CD8-positive, alpha-beta memory T cell (primary cell): ENCODE measurements at regions of chr2 and their contacts with region 1.

Region 1: GRCh38 chr2:112626604-112627059 is 19.1 kb upstream of the SLC20A1 start:
- DNase-seq: peak; percentile 35 to 79 (median 61)
- H3K4me3 ChIP-seq: peak overlapping the region; percentile 58
- H3K4me3 Mint-ChIP-seq: peak overlapping the region; percentile 13 to 88 (median 72)
- H3K27ac ChIP-seq: no peak overlapping the region
- H3K27ac Mint-ChIP-seq: peak overlapping the region in 7 of 8 donors; percentile 79 to 96 (median 88)
- H3K4me1 ChIP-seq: peaks cover 73% of the 10 kb centered on the region
- H3K4me1 Mint-ChIP-seq: peaks cover 68 to 79% (median 76%) of the 10 kb centered on the region in 3 donors
- H3K27me3 ChIP-seq: no peaks in the 10 kb centered on the region
- H3K27me3 Mint-ChIP-seq: peaks cover 0 to 2% of the 10 kb centered on the region in 2 donors

Region 2: GRCh38 chr2:112606488-112606902 is 20.1 kb before region 1 on chr2:
- CTCF ChIA-PET with region 1: interaction called, 28 read pairs
- POLR2A ChIA-PET with region 1: no interaction called
- DNase-seq: no peak
- H3K4me3 ChIP-seq: no peak overlapping the region
- H3K4me3 Mint-ChIP-seq: no peak overlapping the region
- H3K27ac ChIP-seq: no peak overlapping the region
- H3K27ac Mint-ChIP-seq: no peak overlapping the region
- H3K4me1 ChIP-seq: no peaks in the 10 kb centered on the region
- H3K4me1 Mint-ChIP-seq: no peaks in the 10 kb centered on the region
- H3K27me3 ChIP-seq: no peaks in the 10 kb centered on the region
- H3K27me3 Mint-ChIP-seq: peaks cover 0 to 3% of the 10 kb centered on the region in 2 donors

Region 3: GRCh38 chr2:112645310-112646101 is 18.9 kb after region 1 on chr2 and contains the start of gene SLC20A1:
- CTCF ChIA-PET with region 1: interaction called, 147 read pairs
- POLR2A ChIA-PET with region 1: interaction called, 96 read pairs
- DNase-seq: peak; percentile 98 to 99 (median 98)
- H3K4me3 ChIP-seq: peak within 1 kb of the TSS; percentile 68
- H3K4me3 Mint-ChIP-seq: peak within 1 kb of the TSS; percentile 89 to 98 (median 93)
- H3K27ac ChIP-seq: peak within 1 kb of the TSS; percentile 90
- H3K27ac Mint-ChIP-seq: peak within 1 kb of the TSS; percentile 91 to 97 (median 95)
- H3K4me1 ChIP-seq: peaks cover 50% of the 10 kb centered on the region
- H3K4me1 Mint-ChIP-seq: peaks cover 59 to 73% (median 72%) of the 10 kb centered on the region in 3 donors
- H3K27me3 ChIP-seq: no peaks in the 10 kb centered on the region
- H3K27me3 Mint-ChIP-seq: no peaks in the 10 kb centered on the region
- total RNA-seq, gene SLC20A1: 102 to 105 TPM

Region 4: DNA sequence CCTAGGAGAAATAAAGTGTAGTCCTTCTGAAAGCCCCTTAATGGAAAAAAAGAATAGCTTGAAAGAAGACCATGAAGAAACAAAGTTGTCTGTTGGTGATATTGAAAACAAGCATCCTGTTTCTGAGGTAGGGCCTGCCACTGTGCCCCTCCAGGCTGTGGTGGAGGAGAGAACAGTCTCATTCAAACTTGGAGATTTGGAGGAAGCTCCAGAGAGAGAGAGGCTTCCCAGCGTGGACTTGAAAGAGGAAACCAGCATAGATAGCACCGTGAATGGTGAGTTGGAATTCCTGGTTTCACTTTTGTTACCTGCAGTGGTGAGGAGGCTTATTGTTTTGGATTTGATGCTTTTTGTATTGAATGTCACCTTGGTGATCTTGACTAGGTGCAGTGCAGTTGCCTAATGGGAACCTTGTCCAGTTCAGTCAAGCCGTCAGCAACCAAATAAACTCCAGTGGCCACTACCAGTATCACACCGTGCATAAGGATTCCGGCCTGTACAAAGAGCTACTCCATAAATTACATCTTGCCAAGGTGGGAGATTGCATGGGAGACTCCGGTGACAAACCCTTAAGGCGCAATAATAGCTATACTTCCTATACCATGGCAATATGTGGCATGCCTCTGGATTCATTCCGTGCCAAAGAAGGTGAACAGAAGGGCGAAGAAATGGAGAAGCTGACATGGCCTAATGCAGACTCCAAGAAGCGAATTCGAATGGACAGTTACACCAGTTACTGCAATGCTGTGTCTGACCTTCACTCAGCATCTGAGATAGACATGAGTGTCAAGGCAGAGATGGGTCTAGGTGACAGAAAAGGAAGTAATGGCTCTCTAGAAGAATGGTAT is 32.4 kb after region 1 on chr2:
- CTCF ChIA-PET with region 1: interaction called, 11 read pairs
- POLR2A ChIA-PET with region 1: interaction called, 7 read pairs
- DNase-seq: no peak
- H3K4me3 ChIP-seq: no peak overlapping the region
- H3K4me3 Mint-ChIP-seq: peak overlapping the region in 3 of 7 donors; percentile 8 to 54 (median 40)
- H3K27ac ChIP-seq: peak overlapping the region; percentile 45
- H3K27ac Mint-ChIP-seq: peak overlapping the region; percentile 31 to 90 (median 74)
- H3K4me1 ChIP-seq: peaks cover 33% of the 10 kb centered on the region
- H3K4me1 Mint-ChIP-seq: peaks cover 58 to 76% (median 72%) of the 10 kb centered on the region in 3 donors
- H3K27me3 ChIP-seq: no peaks in the 10 kb centered on the region
- H3K27me3 Mint-ChIP-seq: peaks cover 0 to 4% of the 10 kb centered on the region in 2 donors

Region 5: DNA sequence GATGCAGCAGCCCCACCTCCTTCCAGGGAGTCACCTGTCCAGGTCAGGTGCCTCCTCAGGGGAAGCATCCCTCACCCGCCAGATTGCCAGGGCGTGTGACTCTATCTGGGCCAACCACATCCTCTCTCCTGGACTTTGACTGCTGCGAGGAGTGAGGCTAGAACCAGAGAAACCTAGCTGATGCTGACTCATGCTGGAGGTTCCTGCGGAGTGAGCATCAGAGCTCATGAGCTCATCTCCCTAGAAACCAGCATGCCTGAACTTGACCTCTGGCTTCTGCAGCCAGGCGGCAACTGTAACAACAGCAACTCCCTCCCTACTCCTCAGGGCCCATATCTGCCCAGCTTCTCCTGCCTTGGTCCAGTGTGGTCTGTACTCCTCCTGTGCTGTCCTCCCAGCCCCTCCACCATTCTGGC is 65.9 kb after region 1 on chr2:
- CTCF ChIA-PET with region 1: interaction called, 132 read pairs
- POLR2A ChIA-PET with region 1: interaction called, 4 read pairs
- DNase-seq: peak in 4 of 5 donors; percentile 15 to 58 (median 29)
- H3K4me3 ChIP-seq: no peak overlapping the region
- H3K4me3 Mint-ChIP-seq: peak overlapping the region in 5 of 7 donors; percentile 36 to 63 (median 60)
- H3K27ac ChIP-seq: peak overlapping the region; percentile 21
- H3K27ac Mint-ChIP-seq: peak overlapping the region; percentile 1 to 96 (median 84)
- H3K4me1 ChIP-seq: peaks cover 26% of the 10 kb centered on the region
- H3K4me1 Mint-ChIP-seq: peaks cover 27 to 29% (median 29%) of the 10 kb centered on the region in 3 donors
- H3K27me3 ChIP-seq: no peaks in the 10 kb centered on the region
- H3K27me3 Mint-ChIP-seq: peaks cover 0 to 2% of the 10 kb centered on the region in 2 donors

Region 6: GRCh38 chr2:112726497-112727190 is 100.0 kb after region 1 on chr2:
- CTCF ChIA-PET with region 1: interaction called, 71 read pairs
- POLR2A ChIA-PET with region 1: interaction called, 3 read pairs
- DNase-seq: peak; percentile 76 to 90 (median 81)
- H3K4me3 ChIP-seq: no peak overlapping the region
- H3K4me3 Mint-ChIP-seq: no peak overlapping the region
- H3K27ac ChIP-seq: no peak overlapping the region
- H3K27ac Mint-ChIP-seq: peak overlapping the region in 1 of 8 donors; percentile 19
- H3K4me1 ChIP-seq: peaks cover 5% of the 10 kb centered on the region
- H3K4me1 Mint-ChIP-seq: peaks cover 4 to 5% (median 5%) of the 10 kb centered on the region in 3 donors
- H3K27me3 ChIP-seq: no peaks in the 10 kb centered on the region
- H3K27me3 Mint-ChIP-seq: peaks cover 0 to 9% of the 10 kb centered on the region in 2 donors